Spleen (tissue), 13 donors: ENCODE measurements at regions of chr1 and their contacts with region 1.

Region 1: GRCh38 chr1:215526553-215527151 is 40.5 kb upstream of the KCTD3 start:
- DNase-seq: no peak
- H3K4me3 ChIP-seq: no peak overlapping the region
- H3K27ac ChIP-seq: no peak overlapping the region
- H3K4me1 ChIP-seq: peaks cover 0 to 11% (median 2%) of the 10 kb centered on the region in 6 donors
- H3K27me3 ChIP-seq: no peaks in the 10 kb centered on the region
- CTCF ChIP-seq: peak in 10 of 11 experiments; percentile 34 to 70 (median 58)
- POLR2A ChIP-seq: no peak

Region 2: GRCh38 chr1:214623430-214623829 is 903.2 kb before region 1 on chr1:
- intact Hi-C with region 1: loop called (anchors 10 kb)
- DNase-seq: no peak
- H3K4me3 ChIP-seq: no peak overlapping the region
- H3K27ac ChIP-seq: no peak overlapping the region
- H3K4me1 ChIP-seq: peaks cover 0 to 3% (median 0%) of the 10 kb centered on the region in 6 donors
- H3K27me3 ChIP-seq: no peaks in the 10 kb centered on the region
- CTCF ChIP-seq: no peak
- POLR2A ChIP-seq: no peak

Region 3: GRCh38 chr1:214660862-214661261 is 865.8 kb before region 1 on chr1:
- intact Hi-C with region 1: loop called (anchors 10 kb)
- DNase-seq: no peak
- H3K4me3 ChIP-seq: no peak overlapping the region
- H3K27ac ChIP-seq: no peak overlapping the region
- H3K4me1 ChIP-seq: no peaks in the 10 kb centered on the region
- H3K27me3 ChIP-seq: no peaks in the 10 kb centered on the region
- CTCF ChIP-seq: peak in 5 of 11 experiments; percentile 11 to 42 (median 25)
- POLR2A ChIP-seq: no peak

Region 4: GRCh38 chr1:216075339-216075738 is 548.7 kb after region 1 on chr1:
- intact Hi-C with region 1: no loop called
- DNase-seq: no peak
- H3K4me3 ChIP-seq: no peak overlapping the region
- H3K27ac ChIP-seq: no peak overlapping the region
- H3K4me1 ChIP-seq: no peaks in the 10 kb centered on the region
- H3K27me3 ChIP-seq: no peaks in the 10 kb centered on the region
- CTCF ChIP-seq: no peak
- POLR2A ChIP-seq: no peak